ENCODE measurements at regions of chr1 and their contacts with region 1.

Region 1: DNA sequence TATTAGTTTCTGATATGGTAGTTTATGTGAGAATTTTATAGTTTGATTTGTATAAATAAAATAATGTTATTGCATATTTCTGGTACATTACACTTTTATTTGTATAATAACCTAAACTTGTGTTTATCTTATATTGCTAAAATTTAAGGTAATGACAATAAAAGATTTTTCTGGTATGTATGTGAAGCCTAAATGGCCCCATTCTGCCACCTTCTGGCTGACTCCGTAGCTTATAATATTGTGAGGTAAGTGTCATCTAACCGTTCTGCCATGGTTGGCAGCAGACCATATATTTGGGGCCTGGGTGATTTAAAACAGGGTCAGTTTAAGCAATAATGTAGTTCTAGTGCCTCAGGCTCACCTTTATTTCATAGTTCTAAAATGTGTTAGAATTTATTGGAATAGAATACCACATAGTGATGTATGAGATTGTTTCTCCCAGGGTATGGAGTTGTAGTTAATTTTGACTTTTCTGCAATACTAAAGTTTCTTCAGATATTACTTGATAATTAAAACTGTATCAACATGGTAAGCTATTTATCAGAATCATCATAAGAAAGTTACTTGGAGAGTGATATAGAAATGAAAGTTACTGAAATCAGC is 21.2 kb upstream of the PRKACB start:
- DNase-seq: peak; percentile 73
- ATAC-seq: peak; percentile 58
- H3K4me3 Mint-ChIP-seq: no peak overlapping the region
- H3K27ac Mint-ChIP-seq: no peak overlapping the region
- H3K4me1 Mint-ChIP-seq: no peaks in the 10 kb centered on the region
- H3K27me3 Mint-ChIP-seq: no peaks in the 10 kb centered on the region

Region 2: GRCh38 chr1:83931658-83932253 is 191.1 kb before region 1 on chr1:
- CTCF ChIA-PET with region 1: interaction called, 13 read pairs
- POLR2A ChIA-PET with region 1: no interaction called
- DNase-seq: peak; percentile 38
- ATAC-seq: peak; percentile 70
- H3K4me3 Mint-ChIP-seq: no peak overlapping the region
- H3K27ac Mint-ChIP-seq: no peak overlapping the region
- H3K4me1 Mint-ChIP-seq: no peaks in the 10 kb centered on the region
- H3K27me3 Mint-ChIP-seq: peaks cover 13% of the 10 kb centered on the region

Region 3: GRCh38 chr1:83978056-83978455 is 144.8 kb before region 1 on chr1:
- CTCF ChIA-PET with region 1: no interaction called
- POLR2A ChIA-PET with region 1: no interaction called
- DNase-seq: no peak
- ATAC-seq: no peak
- H3K4me3 Mint-ChIP-seq: no peak overlapping the region
- H3K27ac Mint-ChIP-seq: no peak overlapping the region
- H3K4me1 Mint-ChIP-seq: no peaks in the 10 kb centered on the region
- H3K27me3 Mint-ChIP-seq: peaks cover 2% of the 10 kb centered on the region

Region 4: DNA sequence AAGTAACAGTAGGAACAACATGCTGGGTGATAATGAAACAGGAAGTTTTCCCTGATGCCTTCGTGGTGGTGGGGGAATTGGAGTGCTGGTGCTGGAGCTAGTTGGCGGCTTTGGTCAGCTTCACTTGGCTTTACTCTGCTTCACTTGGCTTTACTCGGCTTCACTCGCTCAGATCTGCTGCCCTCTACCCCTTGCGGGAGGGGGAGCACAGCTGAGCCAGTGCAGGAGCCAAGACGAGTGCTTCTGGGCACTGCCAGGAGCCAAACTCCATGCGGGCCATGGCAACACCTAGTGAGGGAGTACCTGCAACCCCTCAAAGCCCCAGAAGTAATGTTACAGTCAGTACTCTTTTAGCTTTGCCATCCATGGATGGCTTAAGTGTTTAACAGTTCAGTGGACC is 10.6 kb after region 1 on chr1:
- CTCF ChIA-PET with region 1: interaction called, 14 read pairs
- POLR2A ChIA-PET with region 1: no interaction called
- DNase-seq: no peak
- ATAC-seq: no peak
- H3K4me3 Mint-ChIP-seq: no peak overlapping the region
- H3K27ac Mint-ChIP-seq: no peak overlapping the region
- H3K4me1 Mint-ChIP-seq: peaks cover 16% of the 10 kb centered on the region
- H3K27me3 Mint-ChIP-seq: no peaks in the 10 kb centered on the region

Region 5: DNA sequence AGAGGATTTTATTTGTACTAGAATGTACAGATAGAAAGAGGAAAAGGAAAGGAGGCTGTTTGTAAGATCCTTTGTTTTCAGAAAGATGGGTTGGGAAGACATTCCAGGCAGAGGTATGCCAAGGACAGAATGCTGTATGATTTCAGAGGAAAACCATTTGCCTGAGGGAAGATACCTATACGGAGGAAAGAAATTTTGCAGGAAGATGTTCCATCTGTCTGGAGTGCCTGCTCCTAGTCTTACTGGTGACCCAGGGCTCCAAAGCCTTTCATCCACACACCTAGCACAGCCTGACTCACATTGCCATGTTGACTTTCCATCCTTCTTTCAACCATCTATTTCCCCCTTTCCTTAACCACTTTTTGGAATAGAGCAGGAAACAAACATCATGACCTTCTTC is 196.8 kb after region 1 on chr1:
- CTCF ChIA-PET with region 1: no interaction called
- POLR2A ChIA-PET with region 1: no interaction called
- DNase-seq: no peak
- ATAC-seq: no peak
- H3K4me3 Mint-ChIP-seq: no peak overlapping the region
- H3K27ac Mint-ChIP-seq: no peak overlapping the region
- H3K4me1 Mint-ChIP-seq: no peaks in the 10 kb centered on the region
- H3K27me3 Mint-ChIP-seq: peaks cover 2% of the 10 kb centered on the region